ENCODE measurements at regions of chr3 and their contacts with region 1.

Region 1: DNA sequence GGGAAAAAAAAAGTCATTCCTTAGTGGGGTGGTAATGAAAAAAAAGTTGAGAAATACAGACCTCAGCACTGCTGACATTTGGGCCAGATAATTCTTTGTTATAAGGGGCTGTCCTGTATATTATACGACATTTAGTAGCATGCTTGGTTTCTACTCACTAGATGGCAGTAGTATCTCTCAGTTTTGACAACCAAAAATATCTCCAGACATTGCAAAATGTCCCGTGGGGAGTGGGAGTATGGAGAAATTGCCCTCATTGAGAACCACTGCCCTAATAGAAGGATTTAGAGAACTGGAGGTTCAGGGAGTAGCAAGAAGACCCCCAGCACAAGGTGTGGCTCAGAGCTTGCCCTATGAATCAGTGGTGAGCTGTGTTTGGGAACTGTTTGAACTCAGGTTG is 28.6 kb upstream of the TEX264 start:
- DNase-seq: no peak
- H3K4me3 ChIP-seq: no peak overlapping the region
- CTCF ChIP-seq: peak; percentile 29

Region 2: DNA sequence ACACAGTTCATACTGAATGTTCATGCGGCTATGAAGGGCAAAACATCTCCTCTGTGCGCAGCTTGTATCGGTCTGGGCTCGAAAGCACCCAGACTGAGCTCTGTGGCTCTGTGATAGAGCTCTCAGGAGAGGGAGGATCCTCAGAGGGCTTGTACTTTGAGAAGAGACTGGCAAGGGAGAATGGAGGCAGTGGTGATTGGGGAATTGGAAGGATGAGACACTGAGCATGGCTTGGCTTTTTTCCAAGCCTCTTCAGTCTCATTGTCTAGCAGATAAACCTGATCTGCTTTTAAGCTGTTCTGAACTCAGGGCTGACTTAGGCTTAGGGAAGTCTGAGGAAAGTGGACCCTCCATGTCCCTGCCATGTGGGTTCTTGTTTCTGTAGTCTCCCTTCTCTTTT is 60.9 kb before region 1 on chr3:
- in situ Hi-C with region 1: loop called (anchors 10 kb)
- DNase-seq: no peak
- H3K4me3 ChIP-seq: no peak overlapping the region
- CTCF ChIP-seq: no peak

Region 3: DNA sequence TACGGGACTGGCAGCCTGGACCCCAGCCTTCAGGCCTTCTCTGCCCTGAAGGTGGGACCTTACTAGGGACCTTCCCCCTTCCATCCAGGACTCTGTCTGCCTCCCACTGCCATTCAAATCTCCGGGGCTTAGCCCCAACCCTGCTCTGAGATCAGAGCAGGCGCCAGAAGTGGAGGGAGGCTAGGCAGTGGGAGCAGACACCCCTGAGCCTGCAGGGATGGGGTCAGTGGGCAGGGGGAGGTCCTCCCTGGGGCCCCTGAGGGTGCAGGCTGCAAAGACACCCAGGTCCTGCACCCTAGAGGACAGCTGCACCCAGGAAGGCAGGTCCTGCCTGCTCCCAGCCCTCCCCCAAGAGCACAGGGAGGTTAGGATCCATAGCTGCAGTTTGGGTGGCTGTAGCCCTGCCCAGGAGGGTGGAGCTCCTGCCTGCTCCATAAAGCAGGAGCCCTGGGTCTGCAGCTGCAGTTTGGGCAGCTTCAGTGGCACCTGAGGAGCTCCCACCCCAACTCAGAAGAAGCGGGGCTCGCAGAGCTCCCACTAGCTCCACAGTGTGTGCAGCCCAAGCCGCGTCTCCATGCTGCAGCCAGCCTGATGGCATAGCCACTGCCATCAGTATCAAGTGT is 519.9 kb after region 1 on chr3:
- in situ Hi-C with region 1: no loop called
- DNase-seq: no peak
- H3K4me3 ChIP-seq: no peak overlapping the region
- CTCF ChIP-seq: no peak